Activated CD8-positive, alpha-beta T cell treated with anti-CD3 and anti-CD28 coated beads for 36 hours (primary cell): ENCODE measurements at regions of chr1 and their contacts with region 1.

Region 1: DNA sequence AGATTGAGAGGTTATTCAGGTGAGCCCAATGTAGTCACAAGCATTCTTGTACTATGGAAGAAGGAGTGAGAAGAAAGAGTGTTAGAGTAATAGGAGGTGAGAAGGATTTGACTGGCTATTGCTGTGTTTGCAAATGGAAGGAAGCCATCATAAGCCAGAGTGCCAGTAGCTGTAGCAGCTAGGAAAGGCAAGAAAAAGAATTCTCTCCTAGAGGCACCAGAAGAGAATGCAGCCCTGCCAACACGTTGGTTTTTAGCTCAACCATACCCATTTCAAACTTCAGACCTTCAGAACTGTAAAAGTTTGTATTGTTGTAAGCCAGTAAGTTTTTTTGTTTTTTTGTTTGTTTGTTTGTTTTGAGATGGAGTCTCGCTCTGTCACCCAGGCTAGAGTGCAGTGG is 8.9 kb upstream of the IL12RB2 start:
- DNase-seq: no peak
- ATAC-seq: peak; percentile 37
- H3K4me3 Mint-ChIP-seq: no peak overlapping the region
- H3K27ac Mint-ChIP-seq: no peak overlapping the region
- H3K4me1 Mint-ChIP-seq: peaks cover 18% of the 10 kb centered on the region
- H3K27me3 Mint-ChIP-seq: peaks cover 8% of the 10 kb centered on the region
- CTCF ChIP-seq: no peak

Region 2: DNA sequence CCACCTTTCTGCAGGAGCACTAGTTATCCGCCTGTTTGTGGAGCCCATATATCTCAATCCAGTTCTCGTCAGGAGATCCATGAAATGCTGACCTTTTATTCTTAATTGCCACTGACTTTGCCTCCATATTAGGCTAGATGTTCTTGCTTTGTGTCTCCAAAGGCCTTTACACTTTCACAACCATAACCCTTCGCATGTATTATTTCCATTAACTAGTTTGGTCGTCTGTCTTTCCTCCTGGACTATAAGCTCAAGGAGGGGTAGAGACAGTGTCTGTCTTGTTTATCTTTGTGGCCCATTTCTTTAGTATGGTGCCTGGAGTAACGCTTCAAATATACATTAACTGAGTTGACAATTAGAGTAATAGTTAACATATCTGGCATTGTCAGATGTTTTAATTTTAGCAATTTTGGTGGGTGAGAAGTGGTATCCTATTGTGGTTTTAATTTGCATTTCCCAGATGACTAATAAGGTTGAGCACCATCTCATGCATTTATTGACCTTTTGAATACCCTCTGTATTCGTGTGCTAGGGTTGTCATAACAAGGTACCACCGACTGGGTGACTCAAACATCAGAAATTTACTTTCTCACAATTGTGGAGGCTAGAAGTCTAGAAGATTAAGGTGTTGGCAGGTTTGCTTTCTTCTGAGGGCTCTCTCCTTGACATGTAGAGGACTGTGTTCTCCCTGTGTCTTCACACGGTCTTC is 12.8 kb before region 1 on chr1:
- CTCF ChIA-PET with region 1: interaction called, 10 read pairs
- POLR2A ChIA-PET with region 1: interaction called, 5 read pairs
- intact Hi-C with region 1: no loop called
- DNase-seq: peak; percentile 57
- ATAC-seq: peak; percentile 96
- H3K4me3 Mint-ChIP-seq: no peak overlapping the region
- H3K27ac Mint-ChIP-seq: peak overlapping the region; percentile 88
- H3K4me1 Mint-ChIP-seq: peaks cover 37% of the 10 kb centered on the region
- H3K27me3 Mint-ChIP-seq: peaks cover 4% of the 10 kb centered on the region
- CTCF ChIP-seq: no peak